ENCODE measurements at regions of chr4 and their contacts with region 1.

Region 1: GRCh38 chr4:159273141-159273438 is 170.2 kb downstream of the RAPGEF2 start:
- DNase-seq: peak in 1 of 5 donors; percentile 67
- ATAC-seq: peak in 3 of 4 donors; percentile 61 to 72 (median 69)
- H3K4me3 ChIP-seq: no peak overlapping the region
- H3K27ac ChIP-seq: peak overlapping the region in 10 of 12 donors; percentile 10 to 68 (median 36)
- H3K4me1 ChIP-seq: peaks cover 3 to 80% (median 50%) of the 10 kb centered on the region in 12 donors
- H3K27me3 ChIP-seq: no peaks in the 10 kb centered on the region
- CTCF ChIP-seq: no peak
- POLR2A ChIP-seq: no peak

Region 2: DNA sequence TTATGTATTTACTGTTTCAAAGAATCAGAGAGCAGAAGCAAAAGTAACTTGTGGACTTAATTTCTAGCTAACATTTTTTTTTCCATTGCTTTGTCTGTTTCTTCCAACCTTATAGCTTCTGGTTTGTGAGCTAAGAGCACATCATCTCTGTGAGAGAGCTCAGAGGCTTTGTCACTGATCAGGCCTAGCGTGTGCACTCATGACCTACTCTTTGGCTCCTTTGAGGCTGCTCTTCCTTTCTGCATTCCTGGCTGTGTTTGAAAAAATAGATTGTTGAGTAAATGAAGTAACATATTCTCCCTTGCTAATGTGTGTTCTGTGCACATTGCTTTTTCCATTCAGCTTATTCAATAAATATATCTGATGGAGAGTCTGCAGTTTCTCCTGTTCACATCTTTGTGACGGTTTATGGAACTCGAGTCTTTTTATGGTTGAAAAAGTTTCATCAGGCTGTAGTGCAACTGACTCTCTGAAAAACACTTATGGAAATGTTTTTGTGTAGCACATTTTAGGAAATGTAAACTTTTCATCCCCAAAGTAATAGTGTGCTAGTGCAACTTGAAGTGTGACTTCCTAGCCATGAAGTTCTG is 37.2 kb before region 1 on chr4:
- intact Hi-C with region 1: loop called in 1 of 10 experiments (anchors 5 kb)
- DNase-seq: no peak
- ATAC-seq: peak; percentile 66 to 78 (median 71)
- H3K4me3 ChIP-seq: no peak overlapping the region
- H3K27ac ChIP-seq: peak overlapping the region in 7 of 12 donors; percentile 3 to 45 (median 11)
- H3K4me1 ChIP-seq: peaks cover 6 to 77% (median 36%) of the 10 kb centered on the region in 12 donors
- H3K27me3 ChIP-seq: no peaks in the 10 kb centered on the region
- CTCF ChIP-seq: no peak
- POLR2A ChIP-seq: no peak

Measured in heart left ventricle (tissue), 16 donors.